Breast epithelium (tissue), 4 donors: ENCODE measurements at regions of chr11 and their contacts with region 1.

Region 1: DNA sequence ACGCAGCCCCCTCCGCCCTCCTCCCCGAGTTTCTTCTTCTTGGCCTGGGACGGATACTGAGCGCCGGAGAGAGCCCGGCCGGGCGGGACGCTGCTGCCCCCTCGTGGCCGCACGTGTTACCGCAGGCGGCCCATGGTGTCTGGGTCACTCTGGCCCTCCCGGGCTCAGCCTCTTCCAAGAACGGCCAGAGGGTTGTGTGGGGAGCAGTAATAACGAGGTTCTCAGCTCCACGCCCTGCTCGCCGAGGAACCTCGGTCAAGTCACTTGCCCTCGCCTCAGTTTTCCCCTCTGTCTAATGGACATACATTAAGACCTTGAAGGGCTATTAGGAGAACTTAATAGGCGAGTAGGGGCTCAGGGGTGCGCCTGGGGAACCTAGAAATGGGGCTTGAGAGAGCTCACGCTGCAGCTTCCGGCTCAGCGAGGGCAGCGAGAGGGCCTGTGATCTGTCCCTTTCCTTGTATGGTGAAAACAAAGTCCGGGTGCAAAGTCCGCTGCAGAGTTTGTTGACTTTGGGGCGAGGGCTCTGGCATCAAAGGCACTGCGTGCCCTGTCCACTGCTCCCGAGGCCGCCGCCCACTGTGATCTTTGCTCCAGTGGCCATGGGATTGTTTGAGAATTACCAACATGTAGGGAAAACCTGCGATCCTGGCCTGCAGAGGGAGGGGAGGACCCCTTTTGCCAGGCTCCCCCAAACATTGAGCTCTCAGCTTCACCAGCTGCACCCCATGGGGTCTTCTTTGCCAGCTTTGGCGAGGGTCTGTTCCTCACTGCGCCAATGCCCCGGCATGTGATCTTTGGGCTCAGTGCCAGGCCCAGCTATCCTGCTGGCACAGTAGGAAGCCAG is 14.4 kb upstream of the LRP5 start:
- DNase-seq: peak; percentile 53 to 74
- H3K4me3 ChIP-seq: peak overlapping the region in 1 of 3 donors; percentile 29
- H3K27ac ChIP-seq: no peak overlapping the region
- H3K4me1 ChIP-seq: no peaks in the 10 kb centered on the region
- H3K27me3 ChIP-seq: no peaks in the 10 kb centered on the region
- CTCF ChIP-seq: peak; percentile 90 to 96 (median 92)
- POLR2A ChIP-seq: no peak

Region 2: DNA sequence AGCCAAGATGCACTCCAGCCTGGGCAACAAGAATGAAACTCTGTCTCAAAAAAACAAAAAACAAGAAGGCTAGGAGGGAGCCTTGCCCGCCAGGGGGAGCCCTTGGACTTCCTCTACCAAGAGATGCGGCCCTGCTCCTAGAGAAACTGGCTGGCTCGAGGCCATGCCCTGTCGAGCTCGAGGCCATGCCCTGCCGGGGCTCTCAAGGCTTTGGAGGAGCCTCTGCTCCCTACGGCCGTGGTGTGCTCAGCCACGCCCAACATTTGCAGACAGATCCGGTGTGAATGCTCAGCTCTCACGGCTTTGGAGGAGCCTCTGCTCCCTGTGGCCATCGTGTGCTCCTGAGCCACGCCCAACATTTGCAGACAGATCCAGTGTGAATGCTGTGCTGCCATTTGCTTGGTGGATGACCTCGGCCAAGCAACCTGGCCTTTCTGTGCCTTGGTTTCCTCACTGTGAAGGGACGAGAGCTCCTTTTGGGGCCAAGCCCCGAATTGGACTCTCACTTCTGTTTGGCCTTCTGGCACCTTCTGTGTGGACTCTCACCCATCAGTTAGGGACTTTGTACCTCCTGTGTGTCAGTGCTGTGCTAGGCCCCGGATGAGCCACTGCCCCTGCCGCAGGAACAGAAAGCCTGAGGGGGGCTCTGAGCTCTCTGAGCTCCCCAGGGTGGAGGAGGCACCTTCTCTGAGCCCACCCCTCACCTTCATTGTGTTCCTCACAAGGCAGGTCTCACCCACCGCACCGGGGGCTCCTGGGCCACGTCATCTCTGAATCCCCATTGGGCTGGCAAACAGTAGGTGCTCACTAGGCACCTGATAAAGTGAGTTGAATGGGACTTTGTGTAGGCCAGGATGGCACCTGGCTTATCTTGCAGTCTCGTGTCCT is 40.3 kb before region 1 on chr11:
- intact Hi-C with region 1: loop called (anchors 5 kb)
- DNase-seq: peak; percentile 92 to 97
- H3K4me3 ChIP-seq: peak overlapping the region in 2 of 3 donors; percentile 28 to 47
- H3K27ac ChIP-seq: no peak overlapping the region
- H3K4me1 ChIP-seq: no peaks in the 10 kb centered on the region
- H3K27me3 ChIP-seq: no peaks in the 10 kb centered on the region
- CTCF ChIP-seq: peak; percentile 88 to 94 (median 94)
- POLR2A ChIP-seq: no peak

Region 3: GRCh38 chr11:68447015-68447801 is 149.2 kb after region 1 on chr11:
- intact Hi-C with region 1: loop called (anchors 2 kb)
- DNase-seq: peak; percentile 59 to 74
- H3K4me3 ChIP-seq: no peak overlapping the region
- H3K27ac ChIP-seq: peak overlapping the region in 1 of 2 donors; percentile 12
- H3K4me1 ChIP-seq: no peaks in the 10 kb centered on the region
- H3K27me3 ChIP-seq: no peaks in the 10 kb centered on the region
- CTCF ChIP-seq: peak; percentile 89 to 92 (median 91)
- POLR2A ChIP-seq: no peak

Region 4: GRCh38 chr11:68714060-68714856 is 416.2 kb after region 1 on chr11:
- intact Hi-C with region 1: no loop called
- DNase-seq: no peak
- H3K4me3 ChIP-seq: no peak overlapping the region
- H3K27ac ChIP-seq: no peak overlapping the region
- H3K4me1 ChIP-seq: no peaks in the 10 kb centered on the region
- H3K27me3 ChIP-seq: no peaks in the 10 kb centered on the region
- CTCF ChIP-seq: no peak
- POLR2A ChIP-seq: no peak